ENCODE measurements at regions of chr20 and their contacts with region 1.

Region 1: DNA sequence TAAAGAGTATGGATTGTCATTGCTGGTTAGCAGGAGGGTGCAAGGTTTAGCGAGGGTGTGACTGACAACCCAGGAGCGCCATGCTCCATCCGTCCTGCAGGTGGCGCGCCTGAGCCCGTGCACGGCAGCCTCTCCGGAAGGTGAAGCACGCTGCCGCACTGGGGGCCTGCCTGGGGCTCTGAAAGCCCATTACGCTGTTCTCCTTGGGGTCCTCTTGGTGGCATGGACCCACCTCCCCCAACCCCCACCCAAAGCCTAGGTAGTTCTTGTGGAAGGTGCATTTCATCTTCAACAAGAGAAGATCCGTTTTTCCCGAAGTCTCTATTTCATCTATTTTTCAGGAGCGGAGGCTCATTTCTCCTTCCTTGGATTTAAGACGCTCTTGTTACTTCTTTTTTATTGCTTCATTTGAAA is 197.4 kb upstream of the KCNG1 start:
- DNase-seq: peak in 1 of 2 donors; percentile 44
- ATAC-seq: peak in 1 of 8 donors; percentile 50
- H3K4me3 ChIP-seq: no peak overlapping the region
- H3K27ac ChIP-seq: no peak overlapping the region
- H3K4me1 ChIP-seq: peaks cover 0 to 3% (median 0%) of the 10 kb centered on the region in 9 donors
- H3K27me3 ChIP-seq: peaks cover 0 to 81% (median 63%) of the 10 kb centered on the region in 7 donors
- CTCF ChIP-seq: peak; percentile 60 to 92 (median 72)

Region 2: DNA sequence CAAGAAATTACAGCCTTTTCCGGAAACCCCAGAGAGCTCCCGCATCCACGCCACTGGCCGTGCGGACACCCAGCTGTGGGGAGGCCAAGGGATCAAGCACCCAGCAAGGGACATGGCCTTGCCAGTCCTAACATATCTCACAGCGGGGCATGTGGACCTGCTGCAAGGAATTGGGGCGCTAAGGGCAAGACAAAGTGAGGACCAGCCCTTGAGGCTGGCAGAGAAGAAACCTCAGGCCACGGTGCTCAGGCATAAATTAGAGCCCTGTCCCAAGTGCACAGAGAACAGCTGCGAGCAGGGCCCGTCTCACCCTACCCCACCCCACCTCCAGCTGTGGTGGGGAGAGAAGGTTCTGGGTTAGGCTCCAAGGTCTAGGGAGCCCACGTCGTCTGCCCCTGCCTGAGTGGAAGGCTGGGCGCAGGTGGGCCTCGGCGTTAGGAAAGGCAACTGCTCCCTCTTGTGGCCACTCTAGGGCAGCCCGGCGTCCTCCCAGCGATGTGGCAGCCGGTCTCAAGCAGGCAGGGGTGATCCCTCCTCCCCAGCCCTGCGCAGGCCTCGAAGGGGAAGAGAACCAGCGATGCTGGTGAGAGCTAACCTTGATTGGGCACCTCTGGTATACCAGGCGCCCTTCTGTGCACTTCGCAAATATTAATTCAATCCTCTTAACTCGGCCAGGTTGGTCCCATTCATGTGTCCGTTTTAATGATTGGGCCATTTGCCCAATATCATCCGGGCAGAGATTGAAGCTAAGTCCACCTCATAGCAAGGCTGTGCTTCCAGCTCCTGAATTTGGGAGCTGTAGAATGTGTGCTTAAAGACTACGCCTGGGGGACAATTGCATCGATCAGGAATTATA is 86.4 kb after region 1 on chr20:
- intact Hi-C with region 1: loop called in 6 of 10 experiments (anchors 2 to 10 kb)
- DNase-seq: peak; percentile 64 to 73
- ATAC-seq: peak; percentile 90 to 96 (median 93)
- H3K4me3 ChIP-seq: no peak overlapping the region
- H3K27ac ChIP-seq: no peak overlapping the region
- H3K4me1 ChIP-seq: peaks cover 0 to 8% (median 0%) of the 10 kb centered on the region in 9 donors
- H3K27me3 ChIP-seq: peaks cover 0 to 15% (median 0%) of the 10 kb centered on the region in 7 donors
- CTCF ChIP-seq: peak; percentile 84 to 96 (median 94)

Measured in heart right ventricle (tissue), 16 donors.